T-cell (primary cell): ENCODE measurements at regions of chr9 and their contacts with region 1.

Region 1: GRCh38 chr9:5886114-5886939 is 4.4 kb upstream of the MLANA start:
- DNase-seq: peak; percentile 43 to 85 (median 69)
- ATAC-seq: peak; percentile 87 to 93 (median 92)
- H3K4me3 ChIP-seq: no peak overlapping the region
- H3K4me3 Mint-ChIP-seq: no peak overlapping the region
- H3K27ac ChIP-seq: no peak overlapping the region
- H3K27ac Mint-ChIP-seq: peak overlapping the region in 1 of 2 donors; percentile 59
- H3K4me1 ChIP-seq: peaks cover 0 to 11% of the 10 kb centered on the region in 2 experiments
- H3K4me1 Mint-ChIP-seq: peaks cover 5 to 10% (median 7%) of the 10 kb centered on the region in 3 donors
- H3K27me3 ChIP-seq: no peaks in the 10 kb centered on the region
- H3K27me3 Mint-ChIP-seq: no peaks in the 10 kb centered on the region

Region 2: GRCh38 chr9:5899292-5899691 is 13.0 kb after region 1 on chr9:
- CTCF ChIA-PET with region 1: interaction called, 3 to 12 read pairs
- POLR2A ChIA-PET with region 1: no interaction called
- DNase-seq: peak in 1 of 35 experiments; percentile 18
- ATAC-seq: no peak
- H3K4me3 ChIP-seq: no peak overlapping the region
- H3K4me3 Mint-ChIP-seq: no peak overlapping the region
- H3K27ac ChIP-seq: no peak overlapping the region
- H3K27ac Mint-ChIP-seq: peak overlapping the region in 1 of 2 donors; percentile 34
- H3K4me1 ChIP-seq: no peaks in the 10 kb centered on the region
- H3K4me1 Mint-ChIP-seq: peaks cover 0 to 5% (median 0%) of the 10 kb centered on the region in 3 donors
- H3K27me3 ChIP-seq: no peaks in the 10 kb centered on the region
- H3K27me3 Mint-ChIP-seq: no peaks in the 10 kb centered on the region

Region 3: GRCh38 chr9:6040077-6040476 is 153.8 kb after region 1 on chr9:
- CTCF ChIA-PET with region 1: no interaction called
- POLR2A ChIA-PET with region 1: no interaction called
- DNase-seq: no peak
- ATAC-seq: no peak
- H3K4me3 ChIP-seq: no peak overlapping the region
- H3K4me3 Mint-ChIP-seq: no peak overlapping the region
- H3K27ac ChIP-seq: no peak overlapping the region
- H3K27ac Mint-ChIP-seq: no peak overlapping the region
- H3K4me1 ChIP-seq: no peaks in the 10 kb centered on the region
- H3K4me1 Mint-ChIP-seq: no peaks in the 10 kb centered on the region
- H3K27me3 ChIP-seq: peaks cover 0 to 6% of the 10 kb centered on the region in 2 experiments
- H3K27me3 Mint-ChIP-seq: peaks cover 5 to 8% of the 10 kb centered on the region in 2 donors